ENCODE measurements at regions of chr5 and their contacts with region 1.

Region 1: GRCh38 chr5:6448622-6449464 is at the start of gene UBE2QL1:
- DNase-seq: peak in 1 of 2 donors; percentile 69
- ATAC-seq: peak; percentile 37 to 63 (median 57)
- H3K4me3 ChIP-seq: peak within 1 kb of the TSS; percentile 84
- H3K27ac ChIP-seq: peak within 1 kb of the TSS; percentile 91
- H3K4me1 ChIP-seq: peaks cover 32% of the 10 kb centered on the region
- H3K27me3 ChIP-seq: no peaks in the 10 kb centered on the region
- CTCF ChIP-seq: no peak
- total RNA-seq, gene UBE2QL1: 12.9 to 96.2 (median 20.6) TPM

Region 2: GRCh38 chr5:5886812-5887486 is 561.9 kb before region 1 on chr5:
- intact Hi-C with region 1: loop called in 1 of 2 experiments (anchors 10 kb)
- DNase-seq: peak; percentile 22 to 60
- ATAC-seq: peak; percentile 74 to 92 (median 79)
- H3K4me3 ChIP-seq: peak overlapping the region; percentile 30
- H3K27ac ChIP-seq: no peak overlapping the region
- H3K4me1 ChIP-seq: no peaks in the 10 kb centered on the region
- H3K27me3 ChIP-seq: no peaks in the 10 kb centered on the region
- CTCF ChIP-seq: peak; percentile 66

Region 3: DNA sequence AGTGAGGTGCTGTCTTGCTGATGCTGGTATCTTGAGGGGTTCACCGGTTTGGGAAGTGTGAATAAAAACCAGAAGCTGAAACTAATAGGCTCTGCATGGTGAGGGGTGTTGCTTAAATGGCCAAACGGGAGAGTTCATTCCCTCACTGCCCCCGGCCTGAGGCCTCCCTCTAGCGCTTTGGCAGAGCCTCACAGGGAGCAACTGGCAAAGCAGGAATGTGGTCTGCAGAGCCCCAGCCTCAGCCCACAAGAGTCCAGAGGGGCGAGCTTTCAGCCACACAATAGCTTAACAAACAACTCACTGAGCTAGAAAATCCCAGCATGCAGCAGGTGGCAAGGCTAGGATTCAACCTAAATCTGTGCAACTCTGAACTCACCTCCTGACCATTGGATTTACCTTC is 305.3 kb before region 1 on chr5:
- intact Hi-C with region 1: no loop called
- DNase-seq: no peak
- ATAC-seq: no peak
- H3K4me3 ChIP-seq: no peak overlapping the region
- H3K27ac ChIP-seq: no peak overlapping the region
- H3K4me1 ChIP-seq: no peaks in the 10 kb centered on the region
- H3K27me3 ChIP-seq: peaks cover 0 to 5% (median 0%) of the 10 kb centered on the region in 3 donors
- CTCF ChIP-seq: no peak

Region 4: DNA sequence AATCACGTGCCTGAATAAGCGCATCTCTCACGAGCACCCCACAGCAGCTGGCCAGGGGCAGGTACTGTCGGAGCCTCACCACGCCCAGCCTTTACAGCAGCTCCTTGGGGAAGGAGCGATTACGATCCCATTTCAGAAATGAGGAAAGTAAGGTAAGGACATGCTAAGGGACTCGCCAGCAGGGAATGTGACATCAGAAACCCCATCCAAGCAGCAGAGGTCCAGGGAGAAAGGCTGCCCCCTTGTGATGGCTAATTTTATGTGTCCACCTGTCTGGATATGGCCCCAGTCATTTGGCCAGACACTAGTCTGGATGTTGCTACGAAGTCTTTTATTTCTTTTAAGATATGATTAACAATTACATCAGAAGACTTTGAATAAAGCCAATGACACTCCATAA is 77.1 kb after region 1 on chr5:
- intact Hi-C with region 1: loop called in 1 of 2 experiments (anchors 5 kb)
- DNase-seq: no peak
- ATAC-seq: peak; percentile 43 to 83 (median 68)
- H3K4me3 ChIP-seq: no peak overlapping the region
- H3K27ac ChIP-seq: no peak overlapping the region
- H3K4me1 ChIP-seq: peaks cover 16% of the 10 kb centered on the region
- H3K27me3 ChIP-seq: peaks cover 0 to 1% (median 0%) of the 10 kb centered on the region in 3 donors
- CTCF ChIP-seq: peak; percentile 33

Region 5: DNA sequence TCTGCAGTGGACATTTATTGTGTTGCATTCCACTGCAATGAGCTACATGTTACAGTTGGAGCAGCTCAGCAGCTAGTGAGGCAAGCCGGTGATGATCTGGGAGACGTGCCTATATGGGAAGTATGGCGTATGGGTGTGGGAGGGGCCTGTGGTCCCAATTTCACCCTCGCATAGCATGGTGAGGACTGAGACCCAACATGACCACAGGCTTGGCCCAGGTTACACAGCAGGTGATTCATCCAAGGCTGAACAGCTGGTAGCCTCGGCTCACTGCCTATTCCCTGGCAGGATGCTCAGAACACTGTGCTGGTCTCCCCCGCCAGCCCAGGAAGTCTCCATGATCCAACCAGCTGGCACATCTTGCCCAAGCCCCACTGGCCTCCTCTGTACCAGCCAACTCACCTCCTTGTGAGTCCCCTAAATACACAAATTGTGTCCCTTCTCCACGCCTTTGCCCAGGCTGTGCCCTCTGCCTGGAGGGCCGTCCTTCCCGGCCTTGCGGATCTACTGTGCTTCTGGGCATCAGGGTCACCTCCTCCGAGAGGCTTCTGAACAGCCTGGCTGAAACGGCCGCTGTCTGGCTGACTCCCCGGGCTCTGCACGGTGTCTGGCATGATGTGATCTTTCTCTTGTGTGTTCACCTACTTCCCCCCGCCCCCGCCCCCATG is 102.6 kb after region 1 on chr5:
- intact Hi-C with region 1: loop called (anchors 2 to 10 kb)
- DNase-seq: peak; percentile 83 to 95
- ATAC-seq: peak; percentile 94 to 97 (median 97)
- H3K4me3 ChIP-seq: peak overlapping the region; percentile 25
- H3K27ac ChIP-seq: peak overlapping the region; percentile 86
- H3K4me1 ChIP-seq: peaks cover 21% of the 10 kb centered on the region
- H3K27me3 ChIP-seq: no peaks in the 10 kb centered on the region
- CTCF ChIP-seq: no peak

Region 6: DNA sequence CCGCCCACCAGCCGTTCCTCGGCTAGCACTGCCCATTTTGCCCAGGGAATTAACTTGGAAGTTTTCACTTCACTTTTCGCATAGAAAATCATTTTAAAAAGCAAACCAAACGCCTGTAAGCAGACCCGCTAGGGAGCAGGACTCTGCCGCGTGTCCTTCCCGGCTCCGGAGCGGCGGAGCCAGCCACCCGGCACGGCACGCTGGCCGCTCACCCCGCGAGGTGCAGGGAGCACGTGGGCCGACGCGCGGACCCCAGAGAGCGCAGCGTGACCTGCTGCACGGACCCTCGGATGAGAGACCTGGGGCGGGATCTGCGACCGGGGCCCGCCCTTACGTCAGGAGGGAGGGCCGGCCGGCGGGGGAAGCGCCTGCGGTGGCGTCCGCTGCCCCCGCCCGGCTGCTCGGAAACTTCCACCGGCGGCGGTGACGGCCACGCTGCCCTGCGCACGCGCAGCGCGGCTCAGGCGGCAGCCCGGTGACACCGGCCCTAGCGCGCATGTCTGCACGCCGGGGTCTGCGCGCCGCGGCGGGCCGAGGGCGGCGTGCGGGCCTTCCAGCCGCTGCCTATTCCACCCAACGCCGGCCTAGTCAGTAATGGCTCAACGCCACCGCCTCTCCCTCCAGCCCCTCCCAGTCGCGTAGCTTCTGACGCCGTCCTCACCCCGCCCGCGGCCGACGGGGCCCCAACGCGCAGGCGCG is 263.9 kb after region 1 on chr5:
- intact Hi-C with region 1: loop called in 1 of 2 experiments (anchors 10 kb)
- DNase-seq: peak; percentile 97 to 99
- ATAC-seq: peak; percentile 84 to 87 (median 85)
- H3K4me3 ChIP-seq: peak overlapping the region; percentile 91
- H3K27ac ChIP-seq: peak overlapping the region; percentile 99
- H3K4me1 ChIP-seq: peaks cover 36% of the 10 kb centered on the region
- H3K27me3 ChIP-seq: no peaks in the 10 kb centered on the region
- CTCF ChIP-seq: no peak

Region 7: GRCh38 chr5:6812800-6813731 is 364.2 kb after region 1 on chr5:
- intact Hi-C with region 1: no loop called
- DNase-seq: no peak
- ATAC-seq: peak in 1 of 4 donors; percentile 37
- H3K4me3 ChIP-seq: no peak overlapping the region
- H3K27ac ChIP-seq: no peak overlapping the region
- H3K4me1 ChIP-seq: no peaks in the 10 kb centered on the region
- H3K27me3 ChIP-seq: no peaks in the 10 kb centered on the region
- CTCF ChIP-seq: no peak